Aorta (tissue), 5 donors: ENCODE measurements at regions of chr16 and their contacts with region 1.

Region 1: GRCh38 chr16:30166202-30166902 is 17.1 kb upstream of the CORO1A start:
- DNase-seq: no peak
- ATAC-seq: no peak
- H3K4me3 ChIP-seq: no peak overlapping the region
- H3K27ac ChIP-seq: no peak overlapping the region
- H3K4me1 ChIP-seq: no peaks in the 10 kb centered on the region
- H3K27me3 ChIP-seq: no peaks in the 10 kb centered on the region

Region 2: DNA sequence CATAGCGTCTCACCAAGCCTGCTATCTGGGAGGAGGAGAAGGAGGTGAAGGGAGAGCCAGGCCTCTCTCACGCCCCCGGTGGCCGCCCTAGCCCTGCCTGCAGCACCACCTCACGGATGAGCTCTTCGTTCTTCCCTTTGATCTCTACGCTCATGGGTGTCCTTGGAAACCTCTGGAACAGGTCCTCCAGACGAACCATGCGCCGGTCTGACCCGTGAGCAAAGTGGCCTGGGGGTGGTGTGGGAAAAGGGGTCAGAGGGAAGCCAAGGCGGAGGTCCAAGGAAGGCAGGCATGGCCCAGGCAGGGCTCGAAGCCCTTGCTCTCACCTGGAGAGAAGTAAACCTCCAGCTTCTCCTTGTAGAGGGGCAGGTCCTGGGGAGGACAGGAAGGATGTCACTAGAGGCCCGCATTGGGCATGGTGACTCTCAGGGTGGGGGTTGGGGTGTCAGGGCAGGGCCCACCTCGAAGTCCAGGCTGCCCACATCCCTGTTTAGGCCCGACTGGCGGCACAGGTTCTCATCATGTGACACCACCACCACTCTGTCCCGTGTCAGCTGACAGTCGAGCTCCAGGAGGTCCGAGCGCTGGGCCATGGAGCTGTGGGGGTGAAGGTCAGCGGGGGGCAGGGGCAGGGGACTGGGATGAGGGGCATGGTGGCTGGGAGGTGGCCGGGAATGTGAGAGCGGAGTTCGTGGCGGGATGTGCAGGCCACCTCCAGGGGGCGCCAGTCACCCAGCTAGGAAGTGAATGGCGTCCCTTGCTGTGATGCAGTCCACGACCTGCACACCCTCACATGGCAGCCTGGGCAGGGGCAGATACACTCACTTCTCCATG is 53.9 kb before region 1 on chr16:
- intact Hi-C with region 1: loop called in 1 of 2 experiments (anchors 10 kb)
- DNase-seq: peak; percentile 72 to 91
- ATAC-seq: peak; percentile 40
- H3K4me3 ChIP-seq: no peak overlapping the region
- H3K27ac ChIP-seq: no peak overlapping the region
- H3K4me1 ChIP-seq: no peaks in the 10 kb centered on the region
- H3K27me3 ChIP-seq: no peaks in the 10 kb centered on the region